IMR-90 (cell line): ENCODE measurements at regions of chr18 and their contacts with region 1.

Region 1: DNA sequence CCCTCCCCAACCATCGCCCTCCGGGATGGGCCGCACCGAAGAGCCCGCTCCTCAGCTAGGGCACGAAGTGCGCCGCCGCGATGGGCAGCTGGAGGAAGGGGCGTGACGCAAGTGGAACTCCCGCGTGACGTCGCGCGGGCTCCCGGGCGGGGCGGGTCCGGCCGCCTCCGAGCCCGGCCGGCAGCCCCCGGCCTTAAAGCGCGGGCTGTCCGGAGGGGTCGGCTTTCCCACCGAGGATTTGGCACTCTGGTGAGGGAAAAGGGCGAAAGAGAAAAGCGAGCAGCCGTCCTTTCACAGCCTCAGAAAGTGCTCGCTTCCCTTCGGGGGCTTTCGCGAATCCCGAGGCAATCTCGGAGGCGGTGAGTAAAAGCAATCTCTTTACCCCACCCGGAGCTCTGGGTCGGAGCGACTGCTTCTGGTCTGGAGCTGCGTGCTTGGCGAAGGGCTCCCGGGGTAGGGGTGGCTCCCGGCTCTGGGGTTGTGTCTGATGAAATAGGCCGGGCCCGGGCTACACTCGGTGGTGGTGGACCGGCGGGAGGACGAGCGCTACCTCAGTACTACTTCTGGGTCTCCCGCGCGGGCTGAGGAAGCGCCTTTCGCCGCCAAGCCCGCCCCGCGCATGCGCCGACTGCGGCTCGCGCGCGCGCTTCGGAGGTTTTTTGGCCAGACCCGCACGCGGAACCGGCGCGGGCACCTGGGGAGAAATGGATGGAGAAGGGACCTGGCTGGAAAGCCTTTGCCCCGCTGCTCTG is at the start of gene RBBP8:
- DNase-seq: peak; percentile 75
- ATAC-seq: peak; percentile 96
- H3K4me3 ChIP-seq: peak within 1 kb of the TSS; percentile 86
- H3K27ac ChIP-seq: peak within 1 kb of the TSS; percentile 84
- H3K4me1 ChIP-seq: no peaks in the 10 kb centered on the region
- H3K27me3 ChIP-seq: no peaks in the 10 kb centered on the region
- CTCF ChIP-seq: no peak
- POLR2A ChIP-seq: peak; percentile 84
- RAD21 ChIP-seq: no peak
- total RNA-seq, gene RBBP8: 21.1 and 25.3 TPM in 2 replicates

Region 2: DNA sequence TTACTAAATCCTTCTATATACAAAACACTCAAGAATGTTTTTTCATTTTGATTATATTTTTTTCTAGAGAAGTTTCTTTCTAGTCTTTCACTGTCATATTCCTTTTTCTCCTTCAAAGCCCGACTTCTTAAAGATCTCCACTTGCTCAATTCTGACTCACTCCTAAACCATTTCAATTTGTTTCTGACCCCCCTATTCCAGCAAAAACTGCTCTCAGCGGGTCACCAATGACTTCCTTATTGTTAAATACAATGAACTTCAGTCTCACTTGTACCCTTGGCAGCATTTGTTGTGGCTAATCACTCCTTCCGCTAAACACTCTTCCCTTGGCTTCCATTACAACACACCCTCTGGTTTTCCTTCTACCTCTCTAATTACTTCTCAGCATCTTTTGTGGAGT is 111.4 kb before region 1 on chr18:
- CTCF ChIA-PET with region 1: interaction called, 3 read pairs
- POLR2A ChIA-PET with region 1: no interaction called
- dilution Hi-C with region 1: no loop called
- in situ Hi-C with region 1: no loop called
- intact Hi-C with region 1: loop called (anchors 5 kb)
- DNase-seq: peak; percentile 78
- ATAC-seq: peak; percentile 80
- H3K4me3 ChIP-seq: no peak overlapping the region
- H3K27ac ChIP-seq: no peak overlapping the region
- H3K4me1 ChIP-seq: no peaks in the 10 kb centered on the region; the same call in 1 of the 2 replicates
- H3K27me3 ChIP-seq: no peaks in the 10 kb centered on the region
- CTCF ChIP-seq: no peak
- POLR2A ChIP-seq: no peak
- RAD21 ChIP-seq: no peak

Region 3: DNA sequence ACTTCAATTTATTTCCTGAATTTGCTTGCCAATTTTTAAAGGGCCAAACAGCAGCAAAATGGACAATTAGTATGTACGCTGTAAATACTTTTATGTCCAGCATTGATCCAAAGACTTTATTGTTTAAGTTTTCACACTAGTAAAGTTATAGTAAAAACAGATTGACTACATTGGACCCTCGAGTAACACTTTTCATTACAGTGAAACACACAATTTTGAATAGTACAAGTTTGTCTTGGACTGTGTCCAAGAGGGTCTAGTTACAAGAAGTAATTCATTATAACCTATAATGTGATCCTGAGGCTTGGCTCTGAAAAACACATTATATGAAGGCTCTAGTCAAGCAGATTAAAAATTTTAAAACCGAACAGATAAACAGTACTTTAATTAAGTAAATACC is 11.6 kb before region 1 on chr18:
- CTCF ChIA-PET with region 1: interaction called, 3 read pairs
- POLR2A ChIA-PET with region 1: interaction called, 13 read pairs
- dilution Hi-C with region 1: no loop called
- in situ Hi-C with region 1: no loop called
- intact Hi-C with region 1: no loop called
- DNase-seq: no peak
- ATAC-seq: no peak
- H3K4me3 ChIP-seq: no peak overlapping the region
- H3K27ac ChIP-seq: no peak overlapping the region
- H3K4me1 ChIP-seq: no peaks in the 10 kb centered on the region
- H3K27me3 ChIP-seq: no peaks in the 10 kb centered on the region
- CTCF ChIP-seq: no peak
- POLR2A ChIP-seq: no peak
- RAD21 ChIP-seq: no peak

Region 4: GRCh38 chr18:23283916-23284430 is 350.6 kb after region 1 on chr18:
- CTCF ChIA-PET with region 1: no interaction called
- POLR2A ChIA-PET with region 1: no interaction called
- dilution Hi-C with region 1: no loop called
- in situ Hi-C with region 1: no loop called
- intact Hi-C with region 1: no loop called
- DNase-seq: peak; percentile 63
- ATAC-seq: peak; percentile 77
- H3K4me3 ChIP-seq: no peak overlapping the region
- H3K27ac ChIP-seq: no peak overlapping the region
- H3K4me1 ChIP-seq: peaks cover 12% of the 10 kb centered on the region
- H3K27me3 ChIP-seq: no peaks in the 10 kb centered on the region
- CTCF ChIP-seq: no peak
- POLR2A ChIP-seq: no peak
- RAD21 ChIP-seq: no peak